ENCODE measurements at regions of chr10 and their contacts with region 1.

Region 1: DNA sequence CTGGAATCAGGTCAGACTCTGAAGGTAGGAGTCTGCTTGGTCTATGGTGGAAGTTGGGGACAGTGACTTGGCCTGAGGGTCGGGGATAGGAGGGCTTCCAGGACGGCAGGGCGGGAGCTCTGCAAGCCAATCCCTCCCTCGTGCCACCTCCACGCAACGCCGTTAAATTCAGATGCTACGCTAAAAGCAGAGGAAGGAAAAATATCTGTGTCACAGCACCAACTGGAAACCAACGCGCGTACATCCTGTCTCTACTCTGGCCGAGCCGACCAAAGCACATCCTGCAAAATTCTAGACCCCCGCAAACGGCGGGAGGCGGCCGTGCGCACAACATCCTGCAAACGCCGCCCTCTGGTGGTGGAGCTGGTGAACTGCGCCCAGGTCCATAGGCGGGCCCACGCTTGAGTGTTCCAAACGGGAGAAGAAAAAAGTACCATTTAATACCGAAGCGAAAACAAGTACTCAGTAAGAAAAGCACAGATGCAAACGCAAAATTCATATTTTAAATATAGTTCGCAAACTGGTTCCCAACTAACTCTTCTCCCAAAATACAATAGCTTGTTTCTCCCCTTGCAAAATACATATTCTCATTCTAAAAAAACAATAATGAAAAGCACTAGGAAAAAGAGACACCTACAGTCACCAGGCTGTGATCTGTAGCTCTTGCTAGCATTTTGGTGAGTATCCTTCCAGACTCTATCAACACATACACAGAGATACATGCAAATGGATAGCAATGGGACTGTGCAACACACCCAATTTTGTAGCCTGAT is 45.7 kb upstream of the HSPA12A start:
- DNase-seq: peak; percentile 61
- ATAC-seq: peak; percentile 78
- H3K4me3 ChIP-seq: peak overlapping the region in 1 of 5 experiments; percentile 45
- H3K4me3 Mint-ChIP-seq: peak overlapping the region; percentile 67
- H3K27ac ChIP-seq: no peak overlapping the region
- H3K27ac Mint-ChIP-seq: no peak overlapping the region
- H3K4me1 ChIP-seq: peaks cover 6 to 8% of the 10 kb centered on the region in 2 donors
- H3K4me1 Mint-ChIP-seq: peaks cover 6% of the 10 kb centered on the region
- H3K27me3 ChIP-seq: peaks cover 0 to 6% (median 0%) of the 10 kb centered on the region in 4 experiments
- H3K27me3 Mint-ChIP-seq: peaks cover 24% of the 10 kb centered on the region
- CTCF ChIP-seq: peak; percentile 99

Region 2: DNA sequence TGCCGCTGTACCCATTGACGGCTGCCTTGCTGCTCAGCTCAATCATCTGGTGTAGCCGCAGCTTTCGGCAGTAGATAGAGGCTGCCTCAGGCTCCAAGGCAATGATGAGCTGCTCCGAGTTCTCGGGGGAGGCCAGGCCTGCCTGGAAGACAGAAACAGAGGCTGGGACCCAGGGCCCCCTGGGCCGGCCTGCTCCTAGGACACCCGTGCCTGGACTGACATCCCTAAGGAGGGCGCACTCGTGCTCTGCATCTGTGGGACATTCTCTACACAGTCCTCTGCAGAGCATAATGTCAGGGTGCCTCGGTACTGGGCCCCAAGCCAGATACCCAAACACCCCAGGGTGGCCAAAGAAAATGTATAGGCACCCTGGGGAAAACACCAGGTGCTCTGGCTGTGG is 104.3 kb before region 1 on chr10:
- CTCF ChIA-PET with region 1: interaction called, 13 read pairs
- POLR2A ChIA-PET with region 1: no interaction called
- intact Hi-C with region 1: no loop called
- DNase-seq: no peak
- ATAC-seq: no peak
- H3K4me3 ChIP-seq: no peak overlapping the region
- H3K4me3 Mint-ChIP-seq: no peak overlapping the region
- H3K27ac ChIP-seq: no peak overlapping the region
- H3K27ac Mint-ChIP-seq: no peak overlapping the region
- H3K4me1 ChIP-seq: no peaks in the 10 kb centered on the region
- H3K4me1 Mint-ChIP-seq: no peaks in the 10 kb centered on the region
- H3K27me3 ChIP-seq: no peaks in the 10 kb centered on the region
- H3K27me3 Mint-ChIP-seq: peaks cover 5% of the 10 kb centered on the region
- CTCF ChIP-seq: no peak

Region 3: DNA sequence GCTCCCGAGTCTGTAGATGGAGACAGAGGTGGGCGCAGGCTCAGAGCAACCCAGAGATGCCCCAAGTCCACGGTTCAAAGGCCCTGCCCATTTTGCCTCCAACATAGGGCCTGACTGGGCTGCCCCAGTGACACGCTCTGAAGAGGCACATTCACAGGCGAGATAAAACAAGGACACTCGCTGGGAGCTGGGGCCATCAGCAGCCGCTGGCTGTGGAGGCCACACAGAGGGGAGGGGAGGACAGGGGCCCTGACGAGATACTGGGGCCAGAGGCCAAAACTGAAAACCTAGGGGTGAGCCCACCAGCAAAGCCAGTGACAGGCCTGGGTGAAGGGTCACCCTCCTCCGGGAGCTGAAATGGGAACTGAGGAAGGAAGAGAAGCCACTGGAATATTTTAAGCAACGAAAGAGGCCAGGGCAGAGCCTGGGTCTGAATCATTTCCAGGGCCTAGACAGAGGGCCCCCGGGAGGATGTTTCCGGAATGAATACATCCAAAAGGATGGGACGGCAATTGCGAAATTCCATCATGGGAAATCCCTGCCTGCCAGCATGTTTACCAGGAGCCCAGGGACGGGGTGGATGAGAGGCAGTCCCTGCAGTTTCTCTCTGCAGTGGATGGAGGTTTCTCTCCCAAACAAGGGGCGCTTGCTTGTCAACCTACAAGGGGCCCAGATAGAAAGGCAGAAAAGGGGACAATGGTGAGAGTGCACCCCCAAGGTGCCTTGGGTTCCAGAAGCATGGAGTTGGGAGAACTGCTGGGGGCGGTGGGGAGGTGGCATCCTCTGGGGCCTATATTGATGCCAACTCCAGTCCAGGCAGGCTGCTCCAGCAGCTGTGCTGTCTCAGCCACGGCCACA is 16.7 kb before region 1 on chr10:
- CTCF ChIA-PET with region 1: interaction called, 10 read pairs
- POLR2A ChIA-PET with region 1: no interaction called
- intact Hi-C with region 1: no loop called
- DNase-seq: no peak
- ATAC-seq: no peak
- H3K4me3 ChIP-seq: no peak overlapping the region
- H3K4me3 Mint-ChIP-seq: no peak overlapping the region
- H3K27ac ChIP-seq: no peak overlapping the region
- H3K27ac Mint-ChIP-seq: no peak overlapping the region
- H3K4me1 ChIP-seq: no peaks in the 10 kb centered on the region
- H3K4me1 Mint-ChIP-seq: no peaks in the 10 kb centered on the region
- H3K27me3 ChIP-seq: no peaks in the 10 kb centered on the region
- H3K27me3 Mint-ChIP-seq: peaks cover 16% of the 10 kb centered on the region
- CTCF ChIP-seq: no peak

Region 4: GRCh38 chr10:116925056-116925455 is 137.0 kb after region 1 on chr10:
- CTCF ChIA-PET with region 1: no interaction called
- POLR2A ChIA-PET with region 1: no interaction called
- intact Hi-C with region 1: no loop called
- DNase-seq: no peak
- ATAC-seq: no peak
- H3K4me3 ChIP-seq: no peak overlapping the region
- H3K4me3 Mint-ChIP-seq: no peak overlapping the region
- H3K27ac ChIP-seq: no peak overlapping the region
- H3K27ac Mint-ChIP-seq: no peak overlapping the region
- H3K4me1 ChIP-seq: no peaks in the 10 kb centered on the region
- H3K4me1 Mint-ChIP-seq: no peaks in the 10 kb centered on the region
- H3K27me3 ChIP-seq: no peaks in the 10 kb centered on the region
- H3K27me3 Mint-ChIP-seq: no peaks in the 10 kb centered on the region
- CTCF ChIP-seq: no peak

Region 5: GRCh38 chr10:117167789-117168674 is 380.0 kb after region 1 on chr10:
- CTCF ChIA-PET with region 1: interaction called, 12 read pairs
- POLR2A ChIA-PET with region 1: no interaction called
- intact Hi-C with region 1: no loop called
- DNase-seq: peak; percentile 67
- ATAC-seq: peak; percentile 82
- H3K4me3 ChIP-seq: no peak overlapping the region
- H3K4me3 Mint-ChIP-seq: peak overlapping the region; percentile 50
- H3K27ac ChIP-seq: no peak overlapping the region
- H3K27ac Mint-ChIP-seq: no peak overlapping the region
- H3K4me1 ChIP-seq: peaks cover 22 to 26% of the 10 kb centered on the region in 2 donors
- H3K4me1 Mint-ChIP-seq: peaks cover 17% of the 10 kb centered on the region
- H3K27me3 ChIP-seq: peaks cover 0 to 91% (median 72%) of the 10 kb centered on the region in 4 experiments
- H3K27me3 Mint-ChIP-seq: peaks cover 66% of the 10 kb centered on the region
- CTCF ChIP-seq: peak; percentile 74